A549 (cell line): ENCODE measurements at regions of chr12 and their contacts with region 1.

Region 1: GRCh38 chr12:12837025-12837872 is 24.1 kb downstream of the DDX47 start:
- DNase-seq: peak; percentile 75 to 81
- ATAC-seq: peak; percentile 70 to 76
- H3K4me3 ChIP-seq: no peak overlapping the region
- H3K27ac ChIP-seq: peak overlapping the region; percentile 70 to 88
- H3K4me1 ChIP-seq: peaks cover 69% of the 10 kb centered on the region
- CTCF ChIP-seq: peak; percentile 79
- EP300 ChIP-seq: no peak
- POLR2A ChIP-seq: no peak
- RAD21 ChIP-seq: peak; percentile 79

Region 2: DNA sequence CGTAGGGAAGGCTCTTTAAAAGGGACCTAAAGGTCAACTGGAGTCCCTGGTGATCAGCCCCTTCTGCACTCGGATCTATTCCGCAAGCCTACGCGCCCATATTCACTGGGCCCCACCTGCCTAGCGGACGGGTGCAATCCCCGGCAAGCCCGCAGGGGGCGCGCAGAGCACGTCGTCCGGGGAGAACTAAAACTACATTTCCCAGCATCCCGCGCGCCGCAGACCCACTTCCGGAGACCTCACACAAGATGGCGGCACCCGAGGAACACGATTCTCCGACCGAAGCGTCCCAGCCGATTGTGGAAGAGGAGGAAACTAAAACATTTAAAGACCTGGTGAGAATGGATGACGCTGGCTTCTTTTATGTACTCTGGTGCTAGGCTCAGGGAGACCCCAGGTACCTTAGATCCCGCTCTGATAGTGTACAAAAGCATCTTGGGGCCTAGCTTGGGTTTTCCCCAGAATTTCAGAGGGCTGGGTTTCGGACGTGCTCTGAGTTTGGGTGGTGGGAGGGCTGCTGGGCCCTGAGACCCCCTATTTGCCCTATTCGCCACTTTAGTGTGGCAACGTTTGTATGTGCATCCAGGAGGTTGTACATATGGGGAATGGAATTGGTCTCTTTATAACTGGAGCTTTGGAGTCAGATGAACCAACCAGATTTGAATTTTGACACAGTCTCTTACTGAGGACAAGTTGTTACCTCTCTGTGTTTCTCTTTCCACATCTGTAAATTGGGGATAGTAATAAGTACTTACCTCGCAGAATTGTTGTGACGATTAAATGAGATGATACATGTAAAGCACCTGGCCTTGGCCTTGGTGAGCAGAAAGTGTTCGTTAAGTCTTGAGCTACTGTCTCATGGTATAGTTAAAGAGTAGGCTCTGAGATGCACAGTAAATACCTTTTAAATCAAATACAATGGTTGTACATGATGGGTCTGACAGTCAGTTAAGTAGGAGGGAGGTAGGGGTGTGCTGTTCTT is 23.8 kb before region 1 on chr12 and contains the start of gene DDX47:
- CTCF ChIA-PET with region 1: interaction called, 60 read pairs
- POLR2A ChIA-PET with region 1: no interaction called
- DNase-seq: peak; percentile 87 to 95
- ATAC-seq: peak; percentile 93 to 94
- H3K4me3 ChIP-seq: peak within 1 kb of the TSS; percentile 92
- H3K27ac ChIP-seq: peak within 1 kb of the TSS; percentile 90 to 92
- H3K4me1 ChIP-seq: peaks cover 43% of the 10 kb centered on the region
- CTCF ChIP-seq: peak; percentile 81
- EP300 ChIP-seq: no peak
- POLR2A ChIP-seq: peak; percentile 46
- RAD21 ChIP-seq: peak; percentile 60 to 72
- polyA plus RNA-seq, gene DDX47: 118 and 144 TPM in 2 replicates

Region 3: DNA sequence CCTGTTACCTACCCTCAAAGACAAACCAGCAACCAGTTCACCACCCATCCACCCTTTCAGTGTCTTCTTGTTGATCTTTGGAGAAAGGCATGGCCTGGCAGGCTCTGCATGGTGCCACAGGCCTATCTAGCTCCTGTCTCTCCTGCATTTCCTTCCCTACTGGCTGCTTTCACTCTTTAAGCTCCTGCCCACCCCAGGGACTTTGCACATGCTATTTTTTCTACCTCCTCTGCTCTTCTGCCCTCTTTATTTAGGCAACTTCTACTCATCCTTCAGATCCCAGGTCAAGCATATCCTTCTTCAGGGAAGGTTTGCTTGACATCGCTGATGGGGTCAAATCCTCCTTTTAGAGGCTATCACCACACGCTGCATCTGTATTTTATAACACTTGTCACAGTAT is 27.0 kb after region 1 on chr12:
- CTCF ChIA-PET with region 1: interaction called, 24 read pairs
- POLR2A ChIA-PET with region 1: no interaction called
- DNase-seq: no peak
- ATAC-seq: no peak
- H3K4me3 ChIP-seq: no peak overlapping the region
- H3K27ac ChIP-seq: peak overlapping the region in 1 of 2 experiments; percentile 52; a peak in 2 of 6 replicates
- H3K4me1 ChIP-seq: peaks cover 18% of the 10 kb centered on the region
- CTCF ChIP-seq: no peak
- EP300 ChIP-seq: no peak
- POLR2A ChIP-seq: no peak
- RAD21 ChIP-seq: no peak

Region 4: GRCh38 chr12:12881151-12881894 is 44.1 kb after region 1 on chr12:
- CTCF ChIA-PET with region 1: interaction called, 17 read pairs
- POLR2A ChIA-PET with region 1: interaction called, 3 read pairs
- DNase-seq: peak in 1 of 2 experiments; percentile 90
- ATAC-seq: peak in 1 of 2 experiments; percentile 58; a peak in 4 of 6 replicates
- H3K4me3 ChIP-seq: no peak overlapping the region
- H3K27ac ChIP-seq: peak overlapping the region; percentile 85 to 90
- H3K4me1 ChIP-seq: peaks cover 81% of the 10 kb centered on the region
- CTCF ChIP-seq: no peak
- EP300 ChIP-seq: no peak
- POLR2A ChIP-seq: no peak
- RAD21 ChIP-seq: no peak

Region 5: GRCh38 chr12:12899530-12900380 is 62.5 kb after region 1 on chr12:
- CTCF ChIA-PET with region 1: interaction called, 48 read pairs
- POLR2A ChIA-PET with region 1: interaction called, 3 read pairs
- DNase-seq: peak in 1 of 2 experiments; percentile 76
- ATAC-seq: peak; percentile 33 to 64
- H3K4me3 ChIP-seq: 0 out of 3 replicates have a peak overlapping the region, but pooled peaks have one; percentile 0
- H3K27ac ChIP-seq: peak overlapping the region; percentile 84 to 85
- H3K4me1 ChIP-seq: peaks cover 98% of the 10 kb centered on the region
- CTCF ChIP-seq: no peak
- EP300 ChIP-seq: no peak
- POLR2A ChIP-seq: no peak
- RAD21 ChIP-seq: no peak

Region 6: GRCh38 chr12:12983420-12984035 is 146.3 kb after region 1 on chr12:
- CTCF ChIA-PET with region 1: interaction called, 10 read pairs
- POLR2A ChIA-PET with region 1: no interaction called
- DNase-seq: peak; percentile 61 to 73
- ATAC-seq: peak; percentile 65 to 66; a peak in 5 of 6 replicates
- H3K4me3 ChIP-seq: no peak overlapping the region
- H3K27ac ChIP-seq: no peak overlapping the region
- H3K4me1 ChIP-seq: peaks cover 30% of the 10 kb centered on the region
- CTCF ChIP-seq: peak; percentile 86
- EP300 ChIP-seq: no peak
- POLR2A ChIP-seq: no peak
- RAD21 ChIP-seq: peak; percentile 84 to 91